ENCODE measurements at regions of chrX and their contacts with region 1.

Region 1: DNA sequence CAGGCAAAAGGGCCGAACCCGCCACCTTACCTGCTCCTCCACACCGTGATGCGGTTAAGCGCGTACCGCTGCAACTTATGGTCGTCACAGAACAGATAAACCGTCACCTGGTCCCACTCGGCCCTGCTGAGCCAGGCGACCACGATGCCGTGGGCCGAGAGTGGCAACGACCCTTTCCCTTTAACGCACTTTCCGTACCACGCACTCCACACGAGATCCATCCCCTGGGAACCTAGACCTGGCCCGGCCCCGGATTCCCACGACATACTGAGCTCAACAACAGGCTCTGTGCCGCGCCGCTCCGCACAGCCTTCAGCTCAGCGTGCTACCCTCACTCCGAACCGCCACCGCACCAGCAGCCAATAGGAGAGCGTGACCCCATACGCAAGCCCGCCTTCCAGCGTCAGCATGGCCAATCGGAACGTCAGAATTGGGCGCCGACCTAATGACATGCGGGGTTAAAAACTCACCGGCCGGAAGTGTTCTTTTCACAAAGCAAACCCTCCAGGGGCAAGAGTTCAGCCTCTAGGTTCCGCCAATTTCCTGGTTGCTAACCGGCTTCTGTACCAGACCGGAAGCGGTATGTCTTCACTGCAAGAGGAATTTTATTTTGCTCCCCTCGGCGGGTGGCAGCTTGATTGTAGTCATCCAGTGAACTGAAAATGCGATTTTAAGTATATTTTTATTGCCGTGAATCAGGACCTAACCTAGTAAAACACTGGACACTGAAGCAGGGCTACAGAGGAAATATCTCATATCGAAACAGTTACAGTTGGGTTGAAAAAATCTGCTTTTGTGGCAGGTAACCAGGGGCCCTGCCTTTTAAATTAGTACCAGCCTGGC is at the start of gene LAS1L:
- DNase-seq: peak; percentile 88
- H3K4me3 Mint-ChIP-seq: peak within 1 kb of the TSS; percentile 100
- H3K27ac Mint-ChIP-seq: peak within 1 kb of the TSS; percentile 100
- H3K4me1 Mint-ChIP-seq: peaks cover 14% of the 10 kb centered on the region
- H3K27me3 Mint-ChIP-seq: peaks cover 2% of the 10 kb centered on the region
- total RNA-seq, gene LAS1L: 62.5 and 65.1 TPM in 2 replicates

Region 2: GRCh38 chrX:63754860-63755582 is 1779.7 kb before region 1 on chrX:
- intact Hi-C with region 1: loop called (anchors 5 kb)
- DNase-seq: peak; percentile 81
- H3K4me3 Mint-ChIP-seq: peak overlapping the region; percentile 97
- H3K27ac Mint-ChIP-seq: peak overlapping the region; percentile 94
- H3K4me1 Mint-ChIP-seq: peaks cover 56% of the 10 kb centered on the region
- H3K27me3 Mint-ChIP-seq: peaks cover 2% of the 10 kb centered on the region

Region 3: GRCh38 chrX:64394874-64395567 is 1139.7 kb before region 1 on chrX and contains the start of gene MTMR8:
- intact Hi-C with region 1: loop called (anchors 2 kb)
- DNase-seq: peak; percentile 65
- H3K4me3 Mint-ChIP-seq: peak within 1 kb of the TSS; percentile 87
- H3K27ac Mint-ChIP-seq: peak within 1 kb of the TSS; percentile 54
- H3K4me1 Mint-ChIP-seq: peaks cover 17% of the 10 kb centered on the region
- H3K27me3 Mint-ChIP-seq: no peaks in the 10 kb centered on the region
- total RNA-seq, gene MTMR8: 4.1 and 7.1 TPM in 2 replicates

Region 4: DNA sequence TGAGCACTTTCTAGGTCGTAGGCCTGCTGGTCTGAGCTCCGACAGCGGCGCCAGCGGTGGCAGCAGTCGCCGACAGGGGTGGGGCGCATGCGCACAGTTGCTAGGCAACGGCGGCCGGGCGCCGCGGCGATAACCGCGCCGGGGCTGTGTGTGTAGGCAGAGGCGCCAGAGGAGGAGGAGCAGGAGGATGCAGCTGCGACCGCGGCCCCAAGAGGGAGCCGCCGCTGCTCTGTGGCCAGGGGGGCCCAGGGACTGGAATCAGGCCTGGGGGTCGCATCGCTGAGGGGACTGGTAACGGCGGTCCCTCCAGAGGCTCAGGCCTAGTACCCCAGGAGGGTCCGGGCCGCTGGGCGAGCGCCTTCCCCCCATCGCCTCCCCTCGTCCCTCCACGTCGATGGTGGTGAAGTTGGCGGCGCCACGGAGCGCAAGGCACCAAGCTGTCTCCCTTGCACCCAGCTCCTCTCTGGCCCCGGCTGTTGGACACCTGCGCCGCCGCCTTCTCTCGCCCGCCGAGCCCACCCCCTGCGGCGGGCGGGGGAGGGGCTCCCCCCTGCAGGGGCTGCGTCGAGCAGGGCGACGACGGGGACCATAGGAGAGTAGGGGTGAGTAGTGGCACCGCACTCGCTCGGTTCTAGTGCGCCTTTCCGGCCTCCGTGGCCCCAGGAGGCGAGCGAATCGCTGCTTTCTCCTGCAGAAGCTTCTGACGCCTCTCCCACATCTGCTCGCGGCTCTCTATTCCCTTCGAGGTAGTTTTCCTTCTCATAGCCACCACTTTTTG is 499.8 kb before region 1 on chrX:
- intact Hi-C with region 1: loop called (anchors 2 kb)
- DNase-seq: peak; percentile 76
- H3K4me3 Mint-ChIP-seq: peak within 1 kb of the TSS; percentile 91
- H3K27ac Mint-ChIP-seq: peak within 1 kb of the TSS; percentile 92
- H3K4me1 Mint-ChIP-seq: peaks cover 20% of the 10 kb centered on the region
- H3K27me3 Mint-ChIP-seq: no peaks in the 10 kb centered on the region

Region 5: GRCh38 chrX:65253817-65254216 is 280.9 kb before region 1 on chrX:
- intact Hi-C with region 1: no loop called
- DNase-seq: no peak
- H3K4me3 Mint-ChIP-seq: no peak overlapping the region
- H3K27ac Mint-ChIP-seq: no peak overlapping the region
- H3K4me1 Mint-ChIP-seq: no peaks in the 10 kb centered on the region
- H3K27me3 Mint-ChIP-seq: no peaks in the 10 kb centered on the region

Region 6: GRCh38 chrX:65677954-65678469 is 143.3 kb after region 1 on chrX:
- intact Hi-C with region 1: loop called (anchors 5 kb)
- DNase-seq: no peak
- H3K4me3 Mint-ChIP-seq: peak overlapping the region; percentile 45
- H3K27ac Mint-ChIP-seq: peak overlapping the region; percentile 78
- H3K4me1 Mint-ChIP-seq: peaks cover 89% of the 10 kb centered on the region
- H3K27me3 Mint-ChIP-seq: no peaks in the 10 kb centered on the region

Region 7: GRCh38 chrX:66728818-66729271 is 1194.2 kb after region 1 on chrX:
- intact Hi-C with region 1: loop called (anchors 1 kb)
- DNase-seq: peak; percentile 19
- H3K4me3 Mint-ChIP-seq: peak overlapping the region; percentile 91
- H3K27ac Mint-ChIP-seq: peak overlapping the region; percentile 89
- H3K4me1 Mint-ChIP-seq: no peaks in the 10 kb centered on the region
- H3K27me3 Mint-ChIP-seq: peaks cover 2% of the 10 kb centered on the region